Naive thymus-derived CD4-positive, alpha-beta T cell (primary cell): ENCODE measurements at regions of chr6 and their contacts with region 1.

Region 1: DNA sequence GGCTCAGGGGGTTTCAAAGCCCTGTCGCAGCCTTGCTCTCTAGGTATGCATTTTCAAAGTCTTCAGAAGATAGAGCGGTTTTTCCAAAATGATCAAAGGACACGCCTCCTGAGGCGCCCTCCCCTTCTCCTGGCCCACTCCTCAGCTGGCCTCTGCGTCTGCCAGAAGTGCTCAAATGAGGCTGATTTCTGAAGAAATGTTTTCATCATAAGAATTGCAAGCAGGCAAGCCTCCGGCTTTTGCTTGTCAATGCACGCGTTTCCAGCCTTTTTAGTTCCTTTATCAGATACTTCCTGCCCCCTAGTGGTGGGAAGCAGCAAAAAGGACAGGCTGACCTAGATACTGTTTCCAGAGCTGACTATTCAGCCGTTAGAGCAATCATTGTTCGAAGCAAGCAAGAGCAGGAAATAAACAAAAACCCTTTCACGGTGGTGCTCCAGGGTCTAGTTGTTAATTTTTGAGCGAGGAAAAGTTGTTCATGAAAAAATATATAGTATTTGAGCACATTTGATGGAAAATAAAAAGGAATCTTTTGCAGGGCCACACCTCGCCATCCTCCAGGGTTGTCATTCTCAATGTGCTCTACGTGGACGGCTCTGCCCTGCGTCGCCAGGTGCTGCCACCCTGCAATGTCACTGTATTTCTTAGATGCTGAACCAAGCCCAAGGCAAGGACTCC is 93.4 kb upstream of the ASF1A start:
- DNase-seq: peak; percentile 45 to 90 (median 86)
- ATAC-seq: peak; percentile 95
- H3K4me3 ChIP-seq: peak overlapping the region; percentile 22
- H3K4me3 Mint-ChIP-seq: peak overlapping the region; percentile 14 to 88 (median 68)
- H3K27ac ChIP-seq: no peak overlapping the region
- H3K27ac Mint-ChIP-seq: peak overlapping the region; percentile 73 to 93 (median 86)
- H3K4me1 ChIP-seq: peaks cover 17 to 25% of the 10 kb centered on the region in 2 donors
- H3K4me1 Mint-ChIP-seq: peaks cover 17 to 51% (median 37%) of the 10 kb centered on the region in 7 donors
- H3K27me3 ChIP-seq: no peaks in the 10 kb centered on the region
- H3K27me3 Mint-ChIP-seq: no peaks in the 10 kb centered on the region

Region 2: GRCh38 chr6:118283766-118284165 is 516.8 kb before region 1 on chr6:
- CTCF ChIA-PET with region 1: interaction called, 3 read pairs
- POLR2A ChIA-PET with region 1: no interaction called
- intact Hi-C with region 1: loop called (anchors 1 kb)
- DNase-seq: peak in 7 of 9 donors; percentile 12 to 69 (median 59)
- ATAC-seq: peak; percentile 68
- H3K4me3 ChIP-seq: no peak overlapping the region
- H3K4me3 Mint-ChIP-seq: no peak overlapping the region
- H3K27ac ChIP-seq: no peak overlapping the region
- H3K27ac Mint-ChIP-seq: peak overlapping the region in 1 of 9 donors; percentile 40
- H3K4me1 ChIP-seq: no peaks in the 10 kb centered on the region
- H3K4me1 Mint-ChIP-seq: peaks cover 0 to 7% (median 0%) of the 10 kb centered on the region in 7 donors
- H3K27me3 ChIP-seq: no peaks in the 10 kb centered on the region
- H3K27me3 Mint-ChIP-seq: peaks cover 6 to 38% (median 14%) of the 10 kb centered on the region in 5 donors

Region 3: GRCh38 chr6:118618679-118619377 is 181.7 kb before region 1 on chr6:
- CTCF ChIA-PET with region 1: interaction called, 3 read pairs
- POLR2A ChIA-PET with region 1: no interaction called
- intact Hi-C with region 1: loop called (anchors 1 kb)
- DNase-seq: peak; percentile 36 to 70 (median 55)
- ATAC-seq: peak; percentile 92
- H3K4me3 ChIP-seq: no peak overlapping the region
- H3K4me3 Mint-ChIP-seq: peak overlapping the region in 3 of 10 donors; percentile 2 to 52 (median 46)
- H3K27ac ChIP-seq: no peak overlapping the region
- H3K27ac Mint-ChIP-seq: peak overlapping the region; percentile 26 to 96 (median 79)
- H3K4me1 ChIP-seq: peaks cover 0 to 8% of the 10 kb centered on the region in 2 donors
- H3K4me1 Mint-ChIP-seq: peaks cover 21 to 86% (median 77%) of the 10 kb centered on the region in 7 donors
- H3K27me3 ChIP-seq: no peaks in the 10 kb centered on the region
- H3K27me3 Mint-ChIP-seq: no peaks in the 10 kb centered on the region

Region 4: DNA sequence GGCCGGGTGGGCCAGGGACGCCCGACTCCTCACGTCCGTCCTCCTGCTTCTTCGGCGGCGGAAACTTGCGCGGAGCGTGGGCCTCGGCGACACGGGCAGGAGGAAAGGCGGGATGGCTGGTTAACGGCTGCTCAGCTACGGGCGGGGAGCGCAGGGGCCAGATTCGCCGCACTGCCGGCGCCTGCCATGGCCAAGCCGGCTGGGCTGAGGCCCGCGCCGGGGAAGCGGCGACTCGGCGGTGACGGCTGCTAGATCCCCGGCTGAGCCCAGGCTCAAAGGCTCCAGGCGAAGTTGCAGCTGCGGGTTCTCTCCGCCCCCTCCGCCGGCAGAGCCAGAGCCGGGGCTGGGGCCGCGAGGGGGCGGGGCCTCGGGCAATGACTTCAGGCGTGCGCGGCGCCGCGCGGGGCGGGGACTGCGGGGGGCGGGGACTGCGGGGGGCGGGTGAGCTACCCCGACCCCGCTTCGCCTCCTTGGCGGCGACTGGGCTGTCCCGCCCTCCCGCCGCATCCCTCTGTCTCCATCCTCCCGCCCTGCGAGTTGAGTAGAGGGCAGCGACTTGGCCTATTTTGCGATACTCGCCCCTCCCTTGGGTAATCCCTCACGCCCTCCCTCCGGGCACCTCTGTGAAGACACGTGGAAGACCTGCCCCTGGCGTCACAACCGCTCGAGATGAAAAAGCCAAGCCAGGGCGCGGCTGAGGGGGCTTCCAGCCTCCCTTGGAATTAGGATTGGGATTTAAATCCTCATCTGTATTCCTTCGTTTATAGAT is 149.1 kb before region 1 on chr6 and contains the start of gene CEP85L:
- CTCF ChIA-PET with region 1: interaction called, 6 read pairs
- POLR2A ChIA-PET with region 1: interaction called, 4 read pairs
- intact Hi-C with region 1: loop called (anchors 1 kb)
- DNase-seq: peak; percentile 84 to 91 (median 89)
- ATAC-seq: peak; percentile 96
- H3K4me3 ChIP-seq: peak within 1 kb of the TSS; percentile 66
- H3K4me3 Mint-ChIP-seq: peak within 1 kb of the TSS; percentile 91 to 97 (median 94)
- H3K27ac ChIP-seq: peak within 1 kb of the TSS; percentile 87
- H3K27ac Mint-ChIP-seq: peak within 1 kb of the TSS; percentile 88 to 99 (median 94)
- H3K4me1 ChIP-seq: peaks cover 32 to 40% of the 10 kb centered on the region in 2 donors
- H3K4me1 Mint-ChIP-seq: peaks cover 33 to 73% (median 59%) of the 10 kb centered on the region in 7 donors
- H3K27me3 ChIP-seq: no peaks in the 10 kb centered on the region
- H3K27me3 Mint-ChIP-seq: no peaks in the 10 kb centered on the region
- total RNA-seq, gene CEP85L: 51.1 to 89.1 (median 78.6) TPM

Region 5: DNA sequence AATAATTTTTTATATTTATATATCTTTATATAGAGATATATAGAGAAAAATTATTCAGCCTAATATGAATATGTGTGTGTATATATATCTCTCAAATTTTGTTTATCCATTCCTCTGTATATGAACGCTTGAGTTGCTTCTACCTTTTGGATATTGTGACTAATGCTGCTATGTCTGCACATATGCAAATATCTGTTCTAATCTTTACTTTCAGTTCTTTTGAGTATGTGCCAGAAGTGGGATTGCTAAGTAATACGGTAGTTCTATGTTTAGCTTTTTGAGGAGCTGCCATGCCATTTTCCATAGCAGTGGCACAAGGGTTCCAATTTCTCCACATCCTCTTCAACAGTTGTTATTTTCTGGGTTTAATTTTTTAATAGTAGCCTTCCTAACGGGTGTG is 76.3 kb before region 1 on chr6:
- CTCF ChIA-PET with region 1: no interaction called
- POLR2A ChIA-PET with region 1: no interaction called
- intact Hi-C with region 1: loop called in 1 of 2 experiments (anchors 2 kb)
- DNase-seq: peak in 1 of 9 donors; percentile 34
- ATAC-seq: no peak
- H3K4me3 ChIP-seq: peak overlapping the region; percentile 10
- H3K4me3 Mint-ChIP-seq: peak overlapping the region in 7 of 10 donors; percentile 49 to 78 (median 60)
- H3K27ac ChIP-seq: no peak overlapping the region
- H3K27ac Mint-ChIP-seq: peak overlapping the region in 8 of 9 donors; percentile 17 to 99 (median 60)
- H3K4me1 ChIP-seq: peaks cover 18 to 55% of the 10 kb centered on the region in 2 donors
- H3K4me1 Mint-ChIP-seq: peaks cover 40 to 93% (median 80%) of the 10 kb centered on the region in 7 donors
- H3K27me3 ChIP-seq: no peaks in the 10 kb centered on the region
- H3K27me3 Mint-ChIP-seq: no peaks in the 10 kb centered on the region

Region 6: DNA sequence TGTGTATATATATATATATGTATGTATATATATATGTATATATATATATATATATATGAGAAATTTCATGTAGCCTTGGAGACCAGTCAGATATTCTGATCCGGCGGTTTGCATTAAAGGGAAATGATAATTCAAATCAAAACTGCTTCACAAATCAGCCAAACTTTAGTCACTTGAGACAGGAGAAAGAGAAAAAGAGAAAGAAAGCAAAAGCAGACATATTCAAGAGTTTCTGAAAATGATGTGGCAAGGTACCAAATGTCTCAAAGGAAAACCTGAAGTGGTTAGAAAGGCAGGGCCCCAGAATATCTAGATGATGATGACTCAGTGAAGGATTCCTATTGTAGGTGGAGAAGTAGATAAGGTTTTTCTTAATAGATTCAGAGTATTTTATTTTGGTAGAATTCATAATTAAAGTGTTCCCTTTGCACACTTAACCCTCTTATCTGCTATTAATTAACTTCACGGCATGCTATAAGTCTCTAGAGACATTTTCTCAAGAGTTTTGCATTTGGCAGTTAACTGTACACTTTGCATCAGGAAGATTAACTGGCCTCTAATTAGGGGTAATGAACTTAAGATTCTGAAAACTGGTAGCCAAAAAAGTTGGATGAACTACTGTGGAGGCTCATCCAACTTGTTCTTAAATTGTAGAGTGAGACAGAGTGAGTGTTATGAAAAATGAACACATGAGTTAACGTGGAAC is 43.3 kb after region 1 on chr6:
- CTCF ChIA-PET with region 1: no interaction called
- POLR2A ChIA-PET with region 1: no interaction called
- intact Hi-C with region 1: loop called in 1 of 2 experiments (anchors 1 kb)
- DNase-seq: no peak
- ATAC-seq: no peak
- H3K4me3 ChIP-seq: no peak overlapping the region
- H3K4me3 Mint-ChIP-seq: peak overlapping the region in 1 of 10 donors; percentile 4
- H3K27ac ChIP-seq: no peak overlapping the region
- H3K27ac Mint-ChIP-seq: peak overlapping the region in 1 of 9 donors; percentile 24
- H3K4me1 ChIP-seq: no peaks in the 10 kb centered on the region
- H3K4me1 Mint-ChIP-seq: peaks cover 7 to 20% (median 14%) of the 10 kb centered on the region in 7 donors
- H3K27me3 ChIP-seq: no peaks in the 10 kb centered on the region
- H3K27me3 Mint-ChIP-seq: no peaks in the 10 kb centered on the region

Region 7: DNA sequence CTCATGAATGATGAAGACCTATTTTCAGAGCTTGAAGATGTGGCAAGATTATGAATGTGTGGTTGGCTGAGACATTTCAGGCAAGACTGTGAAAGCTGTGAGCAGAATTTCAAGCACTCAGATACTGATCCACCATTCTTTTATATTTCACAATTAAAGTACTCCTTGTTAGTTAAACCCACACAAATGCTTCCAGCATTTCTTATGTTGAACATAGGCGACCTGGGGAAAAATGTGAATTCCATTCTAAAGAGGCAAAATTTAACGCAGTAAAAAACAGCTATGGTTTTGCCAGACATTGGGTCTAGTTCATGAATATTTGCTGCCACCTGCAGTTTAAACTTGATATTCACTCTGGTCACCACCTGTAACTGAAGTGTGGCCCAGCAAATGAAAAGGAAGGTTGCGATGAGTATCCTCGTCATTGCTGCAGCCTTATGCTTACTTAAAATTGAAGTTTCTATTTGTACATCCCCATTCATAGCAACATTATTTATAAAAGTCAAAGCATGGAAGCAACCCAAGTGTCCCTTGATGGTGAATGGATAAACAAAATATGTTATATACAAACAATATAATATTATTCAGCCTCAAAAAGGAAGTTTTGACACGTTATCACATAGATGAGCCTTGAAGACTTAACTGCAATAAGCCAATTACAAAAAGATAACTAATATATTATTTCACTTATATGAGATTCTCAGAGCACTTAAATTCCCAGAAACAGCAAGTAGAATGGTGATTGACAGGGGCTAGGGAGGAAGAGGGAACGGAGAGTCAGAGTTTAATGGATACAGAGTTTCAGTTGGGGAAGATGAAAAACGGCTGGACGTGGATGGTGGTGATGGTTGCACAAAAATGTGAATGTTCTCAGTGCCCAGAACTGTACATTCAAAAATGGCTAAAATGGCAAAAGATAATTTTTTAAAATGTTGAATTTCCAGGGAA is 310.3 kb after region 1 on chr6:
- CTCF ChIA-PET with region 1: no interaction called
- POLR2A ChIA-PET with region 1: no interaction called
- intact Hi-C with region 1: loop called (anchors 1 to 10 kb)
- DNase-seq: peak in 7 of 9 donors; percentile 47 to 76 (median 73)
- ATAC-seq: peak; percentile 85
- H3K4me3 ChIP-seq: no peak overlapping the region
- H3K4me3 Mint-ChIP-seq: peak overlapping the region in 4 of 10 donors; percentile 34 to 61 (median 52)
- H3K27ac ChIP-seq: no peak overlapping the region
- H3K27ac Mint-ChIP-seq: peak overlapping the region in 1 of 9 donors; percentile 21
- H3K4me1 ChIP-seq: peaks cover 0 to 8% of the 10 kb centered on the region in 2 donors
- H3K4me1 Mint-ChIP-seq: peaks cover 2 to 22% (median 13%) of the 10 kb centered on the region in 7 donors
- H3K27me3 ChIP-seq: no peaks in the 10 kb centered on the region
- H3K27me3 Mint-ChIP-seq: peaks cover 0 to 4% (median 0%) of the 10 kb centered on the region in 5 donors